Caki2 (cell line): ENCODE measurements at regions of chr10 and their contacts with region 1.

Region 1: DNA sequence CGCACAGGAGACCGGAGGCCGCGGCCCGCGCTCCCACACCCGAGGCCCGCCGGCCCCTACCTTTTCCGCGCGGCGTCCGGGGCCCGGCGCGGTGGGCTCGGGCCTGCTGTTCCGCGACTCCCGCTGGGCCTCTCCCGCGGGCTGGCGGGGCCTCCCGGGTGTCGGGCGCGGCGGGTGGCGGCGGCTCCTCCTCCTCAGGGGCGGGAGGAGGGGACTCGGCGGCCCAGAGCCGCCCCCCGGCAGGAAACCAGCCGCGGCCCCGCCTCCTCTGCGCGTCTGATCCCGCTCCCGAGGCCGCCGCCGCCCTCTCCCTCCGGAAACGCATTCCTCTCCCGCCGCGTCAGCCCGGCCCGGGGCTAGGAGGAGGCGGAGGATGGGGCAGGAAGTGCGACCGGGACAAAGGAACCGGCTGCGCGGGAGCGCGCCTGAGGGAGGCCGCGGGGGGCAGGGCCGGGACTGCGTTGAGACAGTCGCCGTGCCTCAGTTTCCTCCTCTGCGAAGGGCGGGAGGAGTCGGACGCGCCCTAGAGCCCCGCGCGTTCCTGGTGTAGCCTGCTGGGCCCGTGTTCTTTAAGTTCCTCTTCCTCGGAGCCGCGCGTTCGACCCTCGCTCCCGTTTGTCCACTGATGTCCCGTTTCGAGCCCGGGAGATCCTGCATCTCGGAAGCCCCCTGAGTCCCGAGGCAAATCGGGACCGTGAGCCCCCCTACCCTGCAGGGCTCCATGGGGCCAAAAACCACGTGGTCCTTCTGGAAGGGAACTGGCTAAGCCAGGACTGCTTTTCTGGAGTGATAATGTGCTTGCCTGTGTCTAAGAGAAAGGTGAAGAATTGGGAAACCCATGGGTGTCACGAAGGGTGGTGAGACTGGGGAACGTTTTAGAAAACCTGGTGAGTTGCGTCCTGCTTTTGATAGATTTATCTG is at the start of gene ITGB1:
- DNase-seq: peak; percentile 99
- total RNA-seq, gene ITGB1: 894 and 953 TPM in 2 replicates

Region 2: GRCh38 chr10:32771217-32771616 is 187.1 kb before region 1 on chr10:
- in situ Hi-C with region 1: no loop called
- DNase-seq: peak; percentile 5

Region 3: GRCh38 chr10:33008499-33009243 is 50.3 kb after region 1 on chr10:
- in situ Hi-C with region 1: loop called (anchors 5 kb)
- DNase-seq: peak; percentile 79